Gastrocnemius medialis (tissue), 4 donors: ENCODE measurements at regions of chr20 and their contacts with region 1.

Region 1: DNA sequence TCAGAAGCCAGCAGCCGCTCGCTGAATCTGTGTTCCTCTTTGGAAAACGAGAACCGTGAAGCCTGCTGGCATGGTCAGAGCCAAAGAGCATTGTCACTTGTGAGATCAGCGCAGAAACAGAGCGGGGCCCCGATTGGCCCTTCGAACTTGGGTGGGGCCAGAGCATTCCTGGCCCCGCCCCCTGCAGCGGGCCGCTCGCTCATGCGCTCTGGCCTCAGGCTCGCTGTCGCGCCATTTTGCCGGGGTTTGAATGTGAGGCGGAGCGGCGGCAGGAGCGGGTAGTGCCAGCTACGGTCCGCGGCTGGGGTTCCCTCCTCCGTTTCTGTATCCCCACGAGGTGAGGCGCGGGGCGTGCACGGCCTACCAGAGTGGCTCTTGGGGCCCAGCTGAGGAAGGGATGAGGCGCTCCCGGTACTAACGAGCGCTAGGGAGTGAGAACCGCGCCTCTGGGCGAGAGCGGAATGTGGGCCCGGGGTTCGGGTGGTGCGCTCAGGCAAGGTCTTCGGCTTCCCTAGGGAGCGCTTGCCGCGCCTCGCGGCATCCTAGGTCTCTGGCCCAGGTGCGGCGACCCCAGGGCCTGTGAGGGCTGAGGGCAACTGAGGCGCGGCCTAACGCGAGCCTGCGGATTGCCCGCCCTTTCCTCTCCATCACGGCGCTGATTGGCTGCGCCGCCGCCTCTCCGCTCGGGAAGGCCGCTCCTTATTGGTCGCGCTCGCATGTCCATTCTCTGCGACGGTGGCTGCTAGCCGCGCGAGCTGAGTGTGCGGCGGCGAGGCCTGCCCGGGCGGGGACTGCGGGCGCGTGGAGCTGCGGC is at the start of gene CSE1L:
- DNase-seq: peak; percentile 93 to 94
- ATAC-seq: peak; percentile 95
- H3K4me3 ChIP-seq: peak within 1 kb of the TSS; percentile 73 to 98 (median 84)
- H3K27ac ChIP-seq: peak within 1 kb of the TSS; percentile 92 to 97 (median 94)
- H3K4me1 ChIP-seq: peaks cover 11 to 19% of the 10 kb centered on the region in 2 donors
- H3K27me3 ChIP-seq: no peaks in the 10 kb centered on the region
- CTCF ChIP-seq: peak in 4 of 5 experiments; percentile 10 to 56 (median 50)
- POLR2A ChIP-seq: peak; percentile 85 to 87
- total RNA-seq, gene CSE1L: 44.0 to 59.6 (median 58.3) TPM

Region 2: DNA sequence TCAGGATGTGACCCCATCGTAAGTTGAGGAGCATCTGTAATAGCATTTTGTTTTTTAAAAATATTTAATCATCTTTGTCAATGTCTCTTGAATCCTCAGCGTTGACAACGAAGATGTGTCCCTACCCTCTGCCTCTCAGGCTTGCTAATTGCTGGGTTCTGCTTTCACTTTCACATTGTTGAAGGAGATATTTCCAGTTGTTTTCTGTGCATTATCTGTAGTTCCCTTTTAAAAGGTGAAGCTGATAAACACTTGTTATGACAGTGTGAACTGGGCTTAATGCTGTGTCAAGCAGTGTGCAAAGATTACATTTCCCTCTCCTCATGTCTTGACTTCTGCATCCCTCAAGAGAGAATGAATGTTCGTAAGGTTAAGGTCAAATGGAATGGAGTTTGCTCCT is 54.7 kb after region 1 on chr20:
- in situ Hi-C with region 1: no loop called
- intact Hi-C with region 1: no loop called
- DNase-seq: no peak
- ATAC-seq: no peak
- H3K4me3 ChIP-seq: no peak overlapping the region
- H3K27ac ChIP-seq: peak overlapping the region in 1 of 4 donors; percentile 24
- H3K4me1 ChIP-seq: no peaks in the 10 kb centered on the region
- H3K27me3 ChIP-seq: no peaks in the 10 kb centered on the region
- CTCF ChIP-seq: no peak
- POLR2A ChIP-seq: no peak

Region 3: DNA sequence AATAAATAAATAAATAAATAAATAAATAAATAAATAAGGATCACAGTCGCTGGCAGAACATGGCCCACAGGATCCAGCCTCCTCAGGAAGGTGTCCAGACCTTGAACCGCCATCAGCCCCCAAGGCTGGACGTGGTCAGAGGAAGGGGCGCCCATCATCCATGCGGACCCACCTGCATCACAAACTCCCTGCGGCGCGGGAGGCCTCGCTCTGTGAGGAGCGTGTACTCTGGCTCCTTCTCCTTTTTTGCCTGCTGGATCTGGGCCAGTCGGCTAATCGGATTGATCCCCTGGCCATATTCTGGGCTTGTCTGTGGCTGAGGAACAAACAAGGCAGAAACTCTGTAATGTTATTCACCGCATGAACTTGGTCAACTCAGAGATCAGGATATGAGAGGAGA is 76.6 kb after region 1 on chr20:
- in situ Hi-C with region 1: no loop called
- intact Hi-C with region 1: no loop called
- DNase-seq: no peak
- ATAC-seq: no peak
- H3K4me3 ChIP-seq: no peak overlapping the region
- H3K27ac ChIP-seq: no peak overlapping the region
- H3K4me1 ChIP-seq: no peaks in the 10 kb centered on the region
- H3K27me3 ChIP-seq: no peaks in the 10 kb centered on the region
- CTCF ChIP-seq: no peak
- POLR2A ChIP-seq: no peak

Region 4: DNA sequence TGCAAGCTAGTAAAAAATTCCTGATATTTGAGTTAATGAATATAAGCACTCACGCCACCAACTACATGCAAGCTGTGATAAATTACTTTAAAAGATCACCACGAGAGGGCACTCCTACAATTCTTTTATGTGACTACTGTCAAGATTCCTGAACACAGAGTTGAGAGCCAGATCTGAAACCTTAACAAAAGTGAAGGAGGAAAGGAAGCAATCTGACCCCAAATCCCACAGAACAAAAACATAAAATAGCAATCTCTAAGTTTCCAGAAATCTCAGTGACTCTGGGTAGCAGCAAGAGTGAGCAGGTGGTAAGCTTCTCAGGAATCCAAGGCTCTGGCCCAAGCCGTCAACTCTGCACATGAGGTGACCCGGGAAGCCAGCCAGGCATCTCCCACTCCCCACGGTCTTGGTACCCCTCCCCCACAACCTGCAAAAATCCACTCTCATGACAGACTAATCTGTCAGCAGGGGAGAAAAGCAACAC is 86.7 kb after region 1 on chr20:
- in situ Hi-C with region 1: no loop called
- intact Hi-C with region 1: loop called (anchors 5 kb)
- DNase-seq: no peak
- ATAC-seq: peak; percentile 83 to 84
- H3K4me3 ChIP-seq: no peak overlapping the region
- H3K27ac ChIP-seq: peak overlapping the region in 1 of 4 donors; percentile 42
- H3K4me1 ChIP-seq: no peaks in the 10 kb centered on the region
- H3K27me3 ChIP-seq: no peaks in the 10 kb centered on the region
- CTCF ChIP-seq: peak; percentile 34 to 64 (median 58)
- POLR2A ChIP-seq: no peak

Region 5: GRCh38 chr20:49187330-49188168 is 141.3 kb after region 1 on chr20:
- in situ Hi-C with region 1: no loop called
- intact Hi-C with region 1: loop called (anchors 1 kb)
- DNase-seq: peak in 1 of 2 donors; percentile 28
- ATAC-seq: peak; percentile 41 to 42
- H3K4me3 ChIP-seq: peak overlapping the region; percentile 74 to 83 (median 82)
- H3K27ac ChIP-seq: peak overlapping the region; percentile 84 to 98 (median 92)
- H3K4me1 ChIP-seq: peaks cover 16 to 30% of the 10 kb centered on the region in 2 donors
- H3K27me3 ChIP-seq: no peaks in the 10 kb centered on the region
- CTCF ChIP-seq: no peak
- POLR2A ChIP-seq: no peak

Region 6: GRCh38 chr20:49797344-49797615 is 751.0 kb after region 1 on chr20:
- in situ Hi-C with region 1: no loop called
- intact Hi-C with region 1: no loop called
- DNase-seq: peak; percentile 53 to 82
- ATAC-seq: peak; percentile 94 to 96
- H3K4me3 ChIP-seq: no peak overlapping the region
- H3K27ac ChIP-seq: peak overlapping the region; percentile 69 to 73 (median 70)
- H3K4me1 ChIP-seq: peaks cover 0 to 4% of the 10 kb centered on the region in 2 donors
- H3K27me3 ChIP-seq: no peaks in the 10 kb centered on the region
- CTCF ChIP-seq: no peak
- POLR2A ChIP-seq: no peak